AG04450 (cell line): ENCODE measurements at regions of chr2 and their contacts with region 1.

Region 1: GRCh38 chr2:170409164-170409535 is 231.2 kb downstream of the MYO3B start:
- DNase-seq: peak; percentile 16
- H3K4me3 ChIP-seq: no peak overlapping the region
- H3K27ac ChIP-seq: no peak overlapping the region
- H3K27me3 ChIP-seq: peaks cover 4% of the 10 kb centered on the region
- CTCF ChIP-seq: peak; percentile 79

Region 2: DNA sequence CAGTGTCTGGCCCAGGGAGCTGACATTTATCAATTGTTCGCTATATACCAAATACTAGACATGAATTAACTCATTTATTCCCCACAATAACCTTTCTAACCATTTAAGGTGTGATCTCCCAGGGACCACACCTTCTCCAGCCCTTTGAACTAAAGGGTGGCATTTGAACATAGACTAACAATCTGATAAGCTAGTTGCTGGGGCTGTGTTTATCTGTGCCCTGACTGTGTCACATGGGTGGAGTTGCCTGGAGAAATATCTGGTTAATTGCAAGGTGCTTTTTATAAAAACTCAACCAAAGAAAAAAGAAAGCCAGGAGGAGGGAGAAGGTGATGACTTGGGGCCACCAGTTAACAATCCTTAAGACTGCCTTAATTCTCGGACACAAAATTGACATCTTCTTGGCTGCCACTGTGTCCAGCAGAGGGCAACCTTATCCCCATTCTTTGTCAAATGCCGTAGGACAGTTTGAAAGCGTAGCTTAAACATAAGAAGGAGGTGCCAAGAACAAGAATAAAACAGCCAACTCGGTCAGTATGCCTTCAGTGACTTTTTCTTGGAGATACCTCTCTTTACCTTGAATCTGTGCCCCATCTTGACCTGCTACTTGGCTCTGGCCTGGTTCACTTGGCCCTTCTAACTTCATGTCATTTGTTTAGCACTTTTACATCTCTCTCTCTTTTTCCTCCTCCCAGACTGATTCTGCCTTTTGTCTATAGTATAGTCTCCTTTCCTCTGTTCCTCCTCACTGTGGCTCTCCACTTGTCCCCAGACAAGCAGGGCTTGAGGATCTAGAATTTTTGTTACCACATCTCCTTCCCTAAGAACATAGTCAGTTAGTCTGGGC is 47.8 kb before region 1 on chr2:
- CTCF ChIA-PET with region 1: interaction called, 12 read pairs
- POLR2A ChIA-PET with region 1: no interaction called
- DNase-seq: no peak
- H3K4me3 ChIP-seq: no peak overlapping the region
- H3K27ac ChIP-seq: no peak overlapping the region
- H3K27me3 ChIP-seq: peaks cover 6% of the 10 kb centered on the region
- CTCF ChIP-seq: peak; percentile 71

Region 3: GRCh38 chr2:170369894-170370293 is 39.3 kb before region 1 on chr2:
- CTCF ChIA-PET with region 1: interaction called, 16 read pairs
- POLR2A ChIA-PET with region 1: no interaction called
- DNase-seq: no peak
- H3K4me3 ChIP-seq: no peak overlapping the region
- H3K27ac ChIP-seq: no peak overlapping the region
- H3K27me3 ChIP-seq: peaks cover 8% of the 10 kb centered on the region
- CTCF ChIP-seq: peak; percentile 39

Region 4: GRCh38 chr2:170377500-170378207 is 31.5 kb before region 1 on chr2:
- CTCF ChIA-PET with region 1: interaction called, 12 read pairs
- POLR2A ChIA-PET with region 1: no interaction called
- DNase-seq: no peak
- H3K4me3 ChIP-seq: no peak overlapping the region
- H3K27ac ChIP-seq: no peak overlapping the region
- H3K27me3 ChIP-seq: no peaks in the 10 kb centered on the region
- CTCF ChIP-seq: peak; percentile 28

Region 5: DNA sequence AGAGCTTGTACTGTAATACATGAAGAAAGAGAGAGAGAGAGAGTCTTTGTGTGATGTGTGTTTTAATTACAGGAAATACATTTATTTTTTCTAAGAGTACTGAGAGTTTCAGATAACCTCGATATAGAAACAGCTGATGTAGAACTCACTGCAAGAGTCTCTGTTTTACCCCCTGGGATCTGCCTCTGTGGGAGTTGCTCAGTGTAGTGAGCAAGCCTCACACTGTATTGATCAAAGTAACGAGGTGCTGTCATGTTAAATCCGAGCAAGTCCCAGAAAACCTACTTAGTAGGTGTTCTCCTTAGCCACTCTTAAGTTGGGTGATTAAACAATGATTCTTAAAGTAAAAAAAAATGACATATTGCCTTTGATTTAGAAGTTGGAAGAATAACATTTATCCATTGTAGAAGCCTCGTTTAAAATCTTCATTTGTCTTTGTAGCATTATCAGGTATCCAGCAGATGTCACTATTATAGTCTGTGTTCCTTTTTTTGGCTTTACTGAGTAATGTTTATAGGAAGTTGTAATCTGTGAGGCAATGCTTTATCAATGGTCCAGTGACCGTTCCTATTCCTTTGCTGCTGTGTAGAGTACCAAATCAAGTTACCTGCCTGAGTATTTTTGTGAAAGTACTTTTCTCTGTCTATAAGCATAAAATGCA is 12.2 kb before region 1 on chr2:
- CTCF ChIA-PET with region 1: interaction called, 10 read pairs
- POLR2A ChIA-PET with region 1: no interaction called
- DNase-seq: no peak
- H3K4me3 ChIP-seq: no peak overlapping the region
- H3K27ac ChIP-seq: no peak overlapping the region
- H3K27me3 ChIP-seq: no peaks in the 10 kb centered on the region
- CTCF ChIP-seq: peak; percentile 21

Region 6: DNA sequence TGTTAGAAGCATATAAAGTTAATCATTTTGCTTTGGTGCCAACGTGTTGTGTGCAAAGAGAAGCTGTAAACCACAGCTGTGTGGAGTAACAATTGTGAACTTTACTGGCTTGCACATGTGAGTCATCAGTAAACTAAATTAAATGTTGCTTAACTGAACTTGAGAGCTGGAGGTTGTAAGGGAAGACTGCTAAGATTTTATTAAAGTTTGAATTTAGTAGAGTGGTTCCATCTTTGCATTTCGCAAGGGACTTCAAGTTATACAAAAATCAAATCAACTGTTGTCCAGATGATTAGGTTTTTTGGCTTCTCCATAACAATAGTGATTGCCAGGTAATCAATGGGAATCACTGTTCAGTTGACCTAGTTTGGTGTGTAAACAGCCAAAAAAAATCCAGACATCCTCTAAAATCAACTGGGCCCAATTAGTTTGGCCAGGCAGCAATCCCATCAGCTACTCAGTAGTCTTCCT is 16.2 kb after region 1 on chr2:
- CTCF ChIA-PET with region 1: interaction called, 18 read pairs
- POLR2A ChIA-PET with region 1: no interaction called
- DNase-seq: no peak
- H3K4me3 ChIP-seq: no peak overlapping the region
- H3K27ac ChIP-seq: no peak overlapping the region
- H3K27me3 ChIP-seq: no peaks in the 10 kb centered on the region
- CTCF ChIP-seq: no peak

Region 7: GRCh38 chr2:170770606-170771420 is 361.7 kb after region 1 on chr2:
- CTCF ChIA-PET with region 1: interaction called, 11 read pairs
- POLR2A ChIA-PET with region 1: no interaction called
- DNase-seq: no peak
- H3K4me3 ChIP-seq: peak overlapping the region; percentile 68
- H3K27ac ChIP-seq: no peak overlapping the region
- H3K27me3 ChIP-seq: peaks cover 13% of the 10 kb centered on the region
- CTCF ChIP-seq: no peak